ENCODE measurements at regions of chr20 and their contacts with region 1.

Region 1: GRCh38 chr20:34558320-34559218 is at the start of gene MAP1LC3A:
- DNase-seq: peak; percentile 98
- ATAC-seq: peak; percentile 89
- H3K4me3 ChIP-seq: peak within 1 kb of the TSS; percentile 50 to 94 (median 77)
- H3K4me3 Mint-ChIP-seq: peak within 1 kb of the TSS; percentile 85
- H3K27ac ChIP-seq: peak within 1 kb of the TSS; percentile 72 to 86
- H3K27ac Mint-ChIP-seq: peak within 1 kb of the TSS; percentile 92
- H3K4me1 ChIP-seq: peaks cover 8 to 14% of the 10 kb centered on the region in 2 donors
- H3K4me1 Mint-ChIP-seq: peaks cover 13% of the 10 kb centered on the region
- H3K27me3 ChIP-seq: no peaks in the 10 kb centered on the region
- H3K27me3 Mint-ChIP-seq: no peaks in the 10 kb centered on the region
- CTCF ChIP-seq: no peak
- total RNA-seq, gene MAP1LC3A: 3.5 and 4.5 TPM in 2 replicates

Region 2: DNA sequence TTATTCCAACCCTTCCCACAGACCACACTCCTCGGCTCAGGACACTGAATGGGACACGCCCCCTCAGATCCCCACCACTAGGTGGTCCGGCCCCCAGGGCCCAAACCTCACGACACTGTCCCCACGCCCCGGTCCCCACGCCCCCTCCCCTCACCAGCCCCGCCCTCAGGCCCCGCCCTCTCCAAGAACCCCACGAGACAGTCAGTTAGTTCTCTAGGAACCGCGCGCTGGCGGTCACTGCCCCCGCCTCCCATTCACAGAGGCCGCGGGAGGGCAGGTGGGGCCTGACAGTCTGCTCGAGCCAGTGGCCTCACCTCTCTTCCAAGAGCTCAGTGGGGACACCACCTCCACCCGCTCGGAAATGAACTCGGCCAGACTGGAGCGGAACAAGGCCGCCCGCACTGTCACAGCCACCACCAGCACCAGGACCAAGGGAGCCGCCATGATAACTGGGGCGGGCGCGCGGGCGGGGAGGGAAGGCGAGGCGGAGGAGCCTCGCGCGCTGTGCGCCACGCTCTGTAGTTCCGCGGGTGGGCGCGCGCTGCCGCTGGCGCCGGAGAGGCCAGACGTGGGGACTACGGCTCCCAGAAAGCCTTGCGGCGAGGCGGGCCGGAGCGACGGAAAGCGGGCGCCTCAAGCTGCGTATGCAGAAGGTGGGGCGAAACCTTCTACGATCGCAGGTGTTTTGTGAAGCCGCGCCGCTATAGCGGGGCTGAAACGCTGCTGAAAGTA is 118.2 kb after region 1 on chr20 and contains the start of gene PIGU:
- CTCF ChIA-PET with region 1: interaction called, 4 read pairs
- POLR2A ChIA-PET with region 1: no interaction called
- intact Hi-C with region 1: loop called (anchors 1 kb)
- DNase-seq: peak; percentile 98
- ATAC-seq: peak; percentile 93
- H3K4me3 ChIP-seq: peak within 1 kb of the TSS; percentile 74 to 96 (median 78)
- H3K4me3 Mint-ChIP-seq: peak within 1 kb of the TSS; percentile 98
- H3K27ac ChIP-seq: peak within 1 kb of the TSS; percentile 74 to 86
- H3K27ac Mint-ChIP-seq: peak within 1 kb of the TSS; percentile 95
- H3K4me1 ChIP-seq: peaks cover 11 to 12% of the 10 kb centered on the region in 2 donors
- H3K4me1 Mint-ChIP-seq: peaks cover 17% of the 10 kb centered on the region
- H3K27me3 ChIP-seq: no peaks in the 10 kb centered on the region
- H3K27me3 Mint-ChIP-seq: no peaks in the 10 kb centered on the region
- CTCF ChIP-seq: no peak
- total RNA-seq, gene PIGU: 15.4 and 19.3 TPM in 2 replicates

Region 3: DNA sequence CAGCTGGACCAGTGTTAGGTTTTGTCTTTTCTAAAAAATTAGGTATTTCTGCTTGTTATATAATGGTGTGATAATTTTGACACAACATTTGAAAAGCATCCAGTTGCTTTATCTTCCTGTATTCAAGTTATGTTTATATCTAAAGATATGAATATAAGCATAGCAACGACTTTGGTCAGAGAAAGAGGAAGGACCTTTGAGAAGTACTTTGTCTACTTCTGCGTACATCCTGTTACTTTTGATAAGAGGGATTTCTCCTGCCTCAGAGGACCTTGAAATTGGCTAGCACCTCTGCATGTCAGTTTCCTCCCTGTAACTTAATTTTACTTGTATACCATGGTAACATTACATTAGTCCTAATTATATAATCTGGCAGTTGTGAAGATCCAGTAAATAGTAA is 1238.0 kb after region 1 on chr20:
- CTCF ChIA-PET with region 1: no interaction called
- POLR2A ChIA-PET with region 1: interaction called, 11 read pairs
- intact Hi-C with region 1: no loop called
- DNase-seq: peak; percentile 77
- ATAC-seq: peak; percentile 80
- H3K4me3 ChIP-seq: peak overlapping the region in 1 of 5 experiments; percentile 30
- H3K4me3 Mint-ChIP-seq: peak overlapping the region; percentile 52
- H3K27ac ChIP-seq: peak overlapping the region; percentile 90 to 96
- H3K27ac Mint-ChIP-seq: peak overlapping the region; percentile 86
- H3K4me1 ChIP-seq: peaks cover 14 to 16% of the 10 kb centered on the region in 2 donors
- H3K4me1 Mint-ChIP-seq: peaks cover 22% of the 10 kb centered on the region
- H3K27me3 ChIP-seq: no peaks in the 10 kb centered on the region
- H3K27me3 Mint-ChIP-seq: no peaks in the 10 kb centered on the region
- CTCF ChIP-seq: no peak